ENCODE measurements at regions of chr15 and their contacts with region 1.

Region 1: GRCh38 chr15:83248151-83249029 is 36.1 kb downstream of the BNC1 start:
- DNase-seq: no peak
- H3K4me3 ChIP-seq: no peak overlapping the region
- H3K27ac ChIP-seq: no peak overlapping the region
- H3K4me1 ChIP-seq: peaks cover 0 to 7% (median 3%) of the 10 kb centered on the region in 3 donors
- H3K27me3 ChIP-seq: peaks cover 0 to 57% (median 0%) of the 10 kb centered on the region in 4 donors
- CTCF ChIP-seq: peak; percentile 60 to 97 (median 94)
- POLR2A ChIP-seq: no peak

Region 2: DNA sequence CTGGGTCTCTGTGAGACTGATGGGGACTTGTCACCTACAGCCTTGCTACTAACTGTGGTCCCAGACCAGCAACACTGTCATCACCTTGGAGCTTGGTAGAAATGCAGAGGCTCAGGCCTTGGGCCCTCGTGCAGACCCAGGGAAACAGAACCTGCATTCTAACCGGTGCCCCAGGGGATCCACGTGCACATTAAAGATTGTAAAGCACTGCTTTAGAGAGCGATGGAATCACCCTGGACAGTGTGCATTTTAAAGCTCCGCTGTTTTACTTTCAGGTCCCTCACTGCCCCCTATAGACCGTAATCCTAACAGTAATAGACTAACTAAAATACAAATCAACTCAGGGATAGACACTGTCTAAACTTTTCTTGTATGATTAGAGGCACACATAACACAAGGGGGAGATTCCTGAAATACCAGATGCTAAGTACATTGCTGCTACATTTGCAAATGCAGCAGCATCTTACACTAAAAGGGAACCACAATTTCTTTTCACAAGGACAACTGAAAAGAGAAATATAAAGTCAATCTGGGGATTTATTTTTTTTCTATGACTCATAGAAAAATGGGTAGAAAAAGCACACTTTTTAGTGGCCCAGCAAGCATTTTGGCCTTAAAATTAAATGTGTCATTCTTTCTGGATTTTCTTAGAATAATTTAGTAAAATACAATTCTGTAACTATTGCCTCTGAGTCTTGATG is 188.2 kb after region 1 on chr15:
- intact Hi-C with region 1: loop called (anchors 5 kb)
- DNase-seq: no peak
- H3K4me3 ChIP-seq: no peak overlapping the region
- H3K27ac ChIP-seq: no peak overlapping the region
- H3K4me1 ChIP-seq: no peaks in the 10 kb centered on the region
- H3K27me3 ChIP-seq: peaks cover 0 to 21% (median 0%) of the 10 kb centered on the region in 4 donors
- CTCF ChIP-seq: peak in 5 of 6 experiments; percentile 31 to 71 (median 34)
- POLR2A ChIP-seq: no peak

Measured in esophagus squamous epithelium (tissue), 5 donors.